Activated CD8-positive, alpha-beta T cell treated with anti-CD3 and anti-CD28 coated beads, Interleukin-2, amount 10 ng/mL, durations not matched to agents 7 days and 5 days (primary cell): ENCODE measurements at regions of chr4 and their contacts with region 1.

Region 1: DNA sequence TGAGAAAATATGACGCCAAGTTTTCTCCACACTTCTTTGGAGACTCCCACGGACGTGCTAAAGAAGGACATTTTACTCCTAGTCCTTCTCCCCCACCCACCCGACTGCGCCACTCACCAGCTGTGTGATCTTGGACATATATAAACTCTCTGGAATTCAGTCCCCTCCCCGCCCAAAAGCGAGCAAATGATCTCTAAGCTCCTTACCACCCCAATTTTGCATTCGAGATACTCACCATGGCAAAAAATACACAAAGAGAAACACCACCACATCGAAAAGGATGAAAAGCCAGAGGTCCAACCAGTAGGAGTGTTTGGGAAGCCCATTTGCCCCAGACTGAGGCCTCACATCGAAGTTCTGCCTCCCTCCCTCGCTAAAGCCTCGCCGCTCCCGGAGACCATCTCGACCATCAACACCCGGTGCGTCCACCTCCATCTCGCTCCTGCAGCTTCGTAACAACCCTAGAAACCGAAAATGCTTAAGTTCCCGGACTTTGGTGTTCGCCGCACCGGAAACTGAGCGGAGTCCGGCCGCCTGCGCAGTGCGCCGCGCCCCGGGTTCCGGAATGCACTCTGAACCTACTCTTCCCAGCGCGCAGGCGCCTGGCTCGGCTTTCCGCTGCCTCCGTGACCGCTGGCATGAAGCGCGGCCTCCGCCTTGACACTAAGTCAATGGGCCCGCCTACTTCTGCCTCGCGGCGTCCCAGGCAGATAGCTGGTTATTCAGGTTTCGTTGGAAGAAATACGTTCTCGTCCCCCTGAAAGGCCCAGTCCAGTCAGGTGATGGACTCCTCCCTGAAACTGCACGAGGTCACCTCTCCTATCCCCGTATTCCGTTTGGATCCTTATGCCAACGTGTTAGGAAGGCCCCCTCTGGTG is 21.6 kb downstream of the FABP2 start:
- DNase-seq: peak; percentile 95
- ATAC-seq: peak; percentile 98
- H3K4me3 Mint-ChIP-seq: peak overlapping the region; percentile 99
- H3K27ac Mint-ChIP-seq: peak overlapping the region; percentile 99
- H3K4me1 Mint-ChIP-seq: peaks cover 33% of the 10 kb centered on the region
- H3K27me3 Mint-ChIP-seq: peaks cover 2% of the 10 kb centered on the region

Region 2: DNA sequence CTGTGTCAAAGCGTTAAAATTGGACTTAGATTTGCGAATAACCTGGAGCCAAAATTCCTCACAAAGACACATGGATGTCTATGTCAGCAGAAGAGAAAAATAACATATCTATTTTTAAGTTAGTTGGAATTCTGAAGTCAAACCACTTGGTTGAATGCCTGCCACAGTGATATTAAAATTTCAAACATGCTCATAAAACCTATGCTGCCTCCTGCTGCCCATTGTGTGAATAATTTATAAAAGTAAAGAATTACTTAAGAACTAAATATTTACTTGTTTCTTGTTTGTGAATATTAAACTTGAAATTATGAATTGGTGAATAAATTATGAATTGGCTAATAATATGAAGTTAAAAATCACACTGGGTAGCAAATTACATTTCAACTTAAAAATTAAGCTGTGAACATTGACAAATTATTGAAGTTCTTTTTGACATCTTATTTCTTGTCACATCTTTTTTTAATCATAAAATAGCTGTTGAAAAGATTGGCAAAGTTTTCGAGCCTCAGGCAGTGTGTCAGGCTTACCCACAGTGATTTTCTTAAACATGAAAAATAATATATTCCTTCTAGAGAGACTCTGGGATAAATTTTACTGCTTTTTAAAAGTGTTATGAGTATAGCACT is 13.8 kb before region 1 on chr4:
- CTCF ChIA-PET with region 1: interaction called, 14 read pairs
- POLR2A ChIA-PET with region 1: interaction called, 8 read pairs
- DNase-seq: peak; percentile 49
- ATAC-seq: no peak
- H3K4me3 Mint-ChIP-seq: no peak overlapping the region
- H3K27ac Mint-ChIP-seq: no peak overlapping the region
- H3K4me1 Mint-ChIP-seq: peaks cover 18% of the 10 kb centered on the region
- H3K27me3 Mint-ChIP-seq: no peaks in the 10 kb centered on the region